MCF 10A (cell line): ENCODE measurements at regions of chr12 and their contacts with region 1.

Region 1: DNA sequence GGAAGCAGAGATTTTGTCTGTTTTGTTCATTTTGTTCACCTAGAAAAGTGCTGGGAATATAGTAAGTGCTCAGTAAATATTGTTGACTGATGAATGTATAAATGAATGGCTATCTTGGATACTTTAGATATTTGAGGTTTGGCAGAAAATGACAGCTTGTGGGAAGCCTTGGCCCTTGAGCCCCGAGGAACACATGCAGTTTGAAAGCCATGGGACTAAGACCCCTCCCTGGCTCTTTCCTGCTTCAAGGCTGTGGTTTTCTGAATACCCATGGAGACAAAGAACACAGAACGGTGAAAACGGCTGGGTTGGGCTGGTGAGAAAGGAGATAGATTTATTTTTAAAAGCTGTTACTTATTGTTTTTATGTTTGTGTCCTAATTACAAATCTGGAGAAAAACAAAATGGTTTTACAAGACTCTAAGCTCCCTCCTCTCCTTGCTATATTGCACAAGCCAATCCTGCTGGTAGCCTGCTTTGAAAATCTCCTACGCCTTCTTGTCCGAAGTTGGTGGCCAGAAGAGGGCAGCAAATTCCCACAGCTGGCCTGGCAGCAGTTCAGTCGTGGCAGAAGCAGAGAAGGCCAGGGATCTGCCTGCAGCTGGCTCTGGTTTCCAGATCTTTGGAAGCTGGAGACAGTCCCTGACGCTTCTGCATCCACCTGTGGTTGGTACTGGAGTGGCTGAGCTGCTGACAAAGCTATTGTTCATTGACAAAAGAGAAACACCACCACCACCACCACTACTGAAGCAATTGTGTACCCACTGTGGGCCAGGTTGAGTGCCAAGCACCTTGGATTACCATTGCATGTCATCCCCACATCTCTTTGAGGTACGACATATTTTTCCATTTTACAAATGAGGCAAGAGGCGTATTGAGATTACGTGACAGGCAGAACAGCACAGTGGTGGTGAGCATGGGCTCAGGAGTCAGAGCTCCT is 5.2 kb upstream of the KRT85 start:
- DNase-seq: peak; percentile 86
- H3K4me3 Mint-ChIP-seq: no peak overlapping the region
- H3K27ac Mint-ChIP-seq: no peak overlapping the region
- H3K4me1 Mint-ChIP-seq: no peaks in the 10 kb centered on the region
- H3K27me3 Mint-ChIP-seq: peaks cover 11% of the 10 kb centered on the region
- CTCF ChIP-seq: peak; percentile 90

Region 2: GRCh38 chr12:52139552-52140062 is 232.9 kb before region 1 on chr12:
- CTCF ChIA-PET with region 1: interaction called, 17 read pairs
- POLR2A ChIA-PET with region 1: interaction called, 3 read pairs
- intact Hi-C with region 1: loop called (anchors 5 kb)
- DNase-seq: peak; percentile 75
- H3K4me3 Mint-ChIP-seq: no peak overlapping the region
- H3K27ac Mint-ChIP-seq: no peak overlapping the region
- H3K4me1 Mint-ChIP-seq: peaks cover 25% of the 10 kb centered on the region
- H3K27me3 Mint-ChIP-seq: no peaks in the 10 kb centered on the region
- CTCF ChIP-seq: peak; percentile 97

Region 3: DNA sequence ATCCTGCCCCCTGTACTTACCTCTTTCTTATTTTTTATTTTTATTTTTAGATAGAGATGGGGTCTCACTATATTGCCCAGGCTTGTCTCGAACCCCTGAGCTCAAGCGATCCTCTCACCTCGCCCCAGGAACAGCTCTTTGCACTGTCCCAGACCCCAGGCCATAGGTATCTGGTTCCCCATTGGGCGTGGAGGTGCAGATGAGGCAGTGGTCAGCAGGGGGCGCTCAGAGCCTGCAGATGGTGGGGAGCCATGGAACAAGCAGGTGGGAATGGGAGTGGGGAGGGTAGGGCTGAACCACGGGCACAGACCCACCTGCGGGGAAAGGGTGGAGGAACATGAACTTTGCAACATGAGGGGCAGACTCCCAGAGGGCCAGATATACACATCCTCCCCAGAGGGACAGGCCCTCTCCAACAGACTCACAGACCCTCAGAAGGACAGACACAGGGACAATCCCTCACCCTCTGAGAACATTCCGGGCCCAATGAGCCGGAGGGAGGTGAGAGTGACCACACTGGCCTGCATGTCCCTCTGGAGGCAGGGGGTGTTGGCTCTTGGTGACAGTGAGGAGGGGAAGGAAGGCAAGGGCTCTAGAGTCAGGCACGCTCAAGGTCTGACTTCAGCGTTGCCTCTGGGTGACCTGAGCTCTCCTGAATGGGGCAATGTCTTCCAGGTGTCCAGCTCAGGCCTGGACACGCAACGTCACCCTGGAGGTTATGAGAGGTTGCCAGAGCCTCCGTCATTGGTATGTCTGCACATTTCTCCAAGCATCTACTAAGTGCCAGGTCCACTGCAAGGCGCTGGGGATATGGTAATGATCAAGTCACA is 215.5 kb before region 1 on chr12:
- CTCF ChIA-PET with region 1: interaction called, 22 read pairs
- POLR2A ChIA-PET with region 1: interaction called, 9 read pairs
- intact Hi-C with region 1: loop called (anchors 1 kb)
- DNase-seq: peak; percentile 85
- H3K4me3 Mint-ChIP-seq: no peak overlapping the region
- H3K27ac Mint-ChIP-seq: peak overlapping the region; percentile 91
- H3K4me1 Mint-ChIP-seq: peaks cover 30% of the 10 kb centered on the region
- H3K27me3 Mint-ChIP-seq: no peaks in the 10 kb centered on the region
- CTCF ChIP-seq: peak; percentile 98

Region 4: GRCh38 chr12:52327052-52327829 is 45.2 kb before region 1 on chr12:
- CTCF ChIA-PET with region 1: interaction called, 13 read pairs
- POLR2A ChIA-PET with region 1: interaction called, 4 read pairs
- intact Hi-C with region 1: no loop called
- DNase-seq: peak; percentile 98
- H3K4me3 Mint-ChIP-seq: no peak overlapping the region
- H3K27ac Mint-ChIP-seq: no peak overlapping the region
- H3K4me1 Mint-ChIP-seq: peaks cover 14% of the 10 kb centered on the region
- H3K27me3 Mint-ChIP-seq: no peaks in the 10 kb centered on the region
- CTCF ChIP-seq: peak; percentile 97

Region 5: GRCh38 chr12:52390739-52391617 is 18.5 kb after region 1 on chr12:
- CTCF ChIA-PET with region 1: interaction called, 18 read pairs
- POLR2A ChIA-PET with region 1: interaction called, 3 read pairs
- intact Hi-C with region 1: no loop called
- DNase-seq: peak; percentile 67
- H3K4me3 Mint-ChIP-seq: no peak overlapping the region
- H3K27ac Mint-ChIP-seq: no peak overlapping the region
- H3K4me1 Mint-ChIP-seq: peaks cover 24% of the 10 kb centered on the region
- H3K27me3 Mint-ChIP-seq: no peaks in the 10 kb centered on the region
- CTCF ChIP-seq: peak; percentile 86

Region 6: DNA sequence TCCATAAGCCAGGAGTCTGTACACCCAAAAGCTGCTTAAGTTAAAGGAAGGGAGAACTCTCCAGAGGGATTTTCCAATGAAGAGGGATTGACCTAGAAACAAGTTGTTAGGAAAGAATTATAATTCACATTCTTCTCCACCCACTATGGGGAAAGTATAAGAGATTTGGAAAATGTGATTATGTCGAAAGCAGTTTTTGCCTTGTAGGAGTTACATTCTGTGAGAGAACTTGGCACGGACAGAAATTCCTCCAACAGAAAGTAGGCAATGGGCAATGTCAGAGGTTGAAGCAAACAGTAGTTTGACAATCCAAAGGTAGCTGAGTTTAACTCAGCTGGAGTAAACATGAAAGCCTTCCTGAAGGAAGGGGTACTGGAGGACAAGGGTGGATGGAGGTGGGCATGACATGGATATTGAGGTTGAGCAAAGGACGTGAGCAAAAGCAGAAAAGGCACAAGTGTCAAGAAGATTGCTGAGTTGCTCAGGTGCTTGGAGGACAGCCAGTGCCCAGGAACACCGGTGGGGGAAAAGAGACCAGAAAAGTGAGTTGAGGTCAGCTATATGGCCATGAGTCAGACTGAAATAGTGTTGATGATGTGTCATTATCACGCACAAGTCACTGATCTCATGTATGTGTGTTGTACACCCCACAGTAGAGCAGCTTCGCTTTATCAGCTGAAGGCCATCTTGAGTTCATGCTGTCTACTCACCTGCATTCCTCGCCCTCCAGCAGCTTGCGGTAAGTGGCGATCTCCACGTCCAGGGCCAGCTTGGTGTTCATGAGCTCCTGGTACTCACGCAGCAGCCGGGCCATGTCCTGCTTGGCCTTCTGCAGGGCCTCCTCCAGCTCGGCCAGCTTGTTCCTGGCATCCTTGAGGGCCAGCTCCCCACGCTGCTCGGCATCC is 143.7 kb after region 1 on chr12:
- CTCF ChIA-PET with region 1: interaction called, 7 read pairs
- POLR2A ChIA-PET with region 1: interaction called, 9 read pairs
- intact Hi-C with region 1: loop called (anchors 5 kb)
- DNase-seq: peak; percentile 43
- H3K4me3 Mint-ChIP-seq: peak overlapping the region; percentile 80
- H3K27ac Mint-ChIP-seq: peak overlapping the region; percentile 12
- H3K4me1 Mint-ChIP-seq: peaks cover 30% of the 10 kb centered on the region
- H3K27me3 Mint-ChIP-seq: no peaks in the 10 kb centered on the region
- CTCF ChIP-seq: no peak

Region 7: DNA sequence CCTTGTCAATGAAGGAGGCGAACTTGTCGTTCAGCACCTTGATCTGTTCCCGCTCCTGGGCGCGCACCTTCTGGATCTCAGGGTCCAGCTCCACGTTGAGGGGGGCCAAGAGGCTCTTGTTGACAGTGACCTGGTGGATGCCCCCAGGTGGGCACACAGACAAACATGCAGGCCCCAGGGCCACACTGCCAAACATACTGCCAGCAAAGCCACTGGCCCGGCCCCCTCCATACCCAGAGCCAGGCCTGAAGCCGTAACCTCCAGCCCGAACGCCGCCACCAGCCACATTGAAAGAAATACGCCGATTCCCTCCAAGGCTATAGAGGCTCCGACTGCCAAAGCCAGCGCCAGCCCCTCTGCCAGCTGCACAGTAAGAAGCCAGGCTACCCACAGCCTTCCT is 200.8 kb after region 1 on chr12:
- CTCF ChIA-PET with region 1: no interaction called
- POLR2A ChIA-PET with region 1: no interaction called
- intact Hi-C with region 1: no loop called
- DNase-seq: no peak
- H3K4me3 Mint-ChIP-seq: no peak overlapping the region
- H3K27ac Mint-ChIP-seq: no peak overlapping the region
- H3K4me1 Mint-ChIP-seq: no peaks in the 10 kb centered on the region
- H3K27me3 Mint-ChIP-seq: no peaks in the 10 kb centered on the region
- CTCF ChIP-seq: no peak